ENCODE measurements at regions of chr22 and their contacts with region 1.

Region 1: DNA sequence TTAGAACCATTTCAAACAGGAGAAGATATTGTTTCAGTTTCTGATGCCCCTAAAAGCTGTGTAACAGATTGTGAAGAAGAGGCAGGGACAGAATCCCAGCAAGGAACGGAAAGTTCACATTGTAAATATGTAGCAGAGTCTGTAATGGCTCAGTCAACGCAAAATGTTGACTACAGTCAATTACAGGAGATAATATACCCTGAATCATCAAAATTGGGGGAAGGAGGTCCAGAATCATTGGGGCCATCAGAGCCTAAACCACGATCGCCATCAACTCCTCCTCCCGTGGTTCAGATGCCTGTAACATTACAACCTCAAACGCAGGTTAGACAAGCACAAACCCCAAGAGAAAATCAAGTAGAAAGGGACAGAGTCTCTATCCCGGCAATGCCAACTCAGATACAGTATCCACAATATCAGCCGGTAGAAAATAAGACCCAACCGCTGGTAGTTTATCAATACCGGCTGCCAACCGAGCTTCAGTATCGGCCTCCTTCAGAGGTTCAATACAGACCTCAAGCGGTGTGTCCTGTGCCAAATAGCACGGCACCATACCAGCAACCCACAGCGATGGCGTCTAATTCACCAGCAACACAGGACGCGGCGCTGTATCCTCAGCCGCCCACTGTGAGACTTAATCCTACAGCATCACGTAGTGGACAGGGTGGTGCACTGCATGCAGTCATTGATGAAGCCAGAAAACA is 40.8 kb downstream of the IGLL1 start:
- DNase-seq: peak; percentile 70
- H3K4me3 ChIP-seq: peak overlapping the region in 2 of 3 experiments; percentile 6 to 29
- H3K27ac ChIP-seq: no peak overlapping the region
- H3K4me1 ChIP-seq: no peaks in the 10 kb centered on the region
- H3K27me3 ChIP-seq: peaks cover 2% of the 10 kb centered on the region
- CTCF ChIP-seq: peak; percentile 86 to 93

Region 2: DNA sequence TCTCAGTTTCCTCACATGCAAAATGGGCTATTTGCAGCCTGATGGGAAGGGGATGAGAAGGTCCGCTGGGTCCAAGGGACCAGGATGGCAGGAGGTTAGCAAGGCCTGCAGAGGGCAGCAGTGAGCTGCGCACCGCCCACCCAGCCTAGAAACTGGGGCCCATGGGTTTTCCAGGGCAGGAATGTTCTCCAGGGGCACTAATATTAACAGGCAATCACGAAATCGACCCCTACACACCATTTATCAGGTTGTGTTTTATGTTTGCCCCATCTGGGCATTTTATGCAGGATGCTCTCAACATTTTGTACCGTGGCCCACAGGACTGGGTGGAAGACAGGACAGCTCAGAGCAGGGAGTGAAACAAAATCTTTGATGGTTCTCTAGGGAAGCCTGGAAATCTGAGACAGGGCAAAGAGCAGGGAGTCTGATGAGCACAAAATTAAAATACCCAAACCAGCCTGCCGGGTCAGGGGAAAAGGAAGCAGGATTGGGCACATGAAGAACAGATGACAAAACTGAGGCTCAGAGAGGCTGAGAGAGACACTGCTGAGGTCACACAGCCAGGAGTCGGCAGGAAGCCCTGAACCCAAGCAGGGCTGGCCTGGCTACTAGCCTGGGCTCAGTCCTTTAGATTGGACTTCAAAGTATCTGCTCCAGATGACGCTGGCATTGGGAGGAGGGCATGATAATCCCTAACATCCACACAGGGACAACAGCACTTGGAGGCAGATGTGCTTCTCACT is 360.6 kb before region 1 on chr22:
- CTCF ChIA-PET with region 1: no interaction called
- dilution Hi-C with region 1: no loop called
- in situ Hi-C with region 1: no loop called
- intact Hi-C with region 1: loop called (anchors 5 kb)
- DNase-seq: peak; percentile 32
- H3K4me3 ChIP-seq: no peak overlapping the region
- H3K27ac ChIP-seq: no peak overlapping the region
- H3K4me1 ChIP-seq: peaks cover 27% of the 10 kb centered on the region
- H3K27me3 ChIP-seq: no peaks in the 10 kb centered on the region
- CTCF ChIP-seq: peak; percentile 99

Region 3: DNA sequence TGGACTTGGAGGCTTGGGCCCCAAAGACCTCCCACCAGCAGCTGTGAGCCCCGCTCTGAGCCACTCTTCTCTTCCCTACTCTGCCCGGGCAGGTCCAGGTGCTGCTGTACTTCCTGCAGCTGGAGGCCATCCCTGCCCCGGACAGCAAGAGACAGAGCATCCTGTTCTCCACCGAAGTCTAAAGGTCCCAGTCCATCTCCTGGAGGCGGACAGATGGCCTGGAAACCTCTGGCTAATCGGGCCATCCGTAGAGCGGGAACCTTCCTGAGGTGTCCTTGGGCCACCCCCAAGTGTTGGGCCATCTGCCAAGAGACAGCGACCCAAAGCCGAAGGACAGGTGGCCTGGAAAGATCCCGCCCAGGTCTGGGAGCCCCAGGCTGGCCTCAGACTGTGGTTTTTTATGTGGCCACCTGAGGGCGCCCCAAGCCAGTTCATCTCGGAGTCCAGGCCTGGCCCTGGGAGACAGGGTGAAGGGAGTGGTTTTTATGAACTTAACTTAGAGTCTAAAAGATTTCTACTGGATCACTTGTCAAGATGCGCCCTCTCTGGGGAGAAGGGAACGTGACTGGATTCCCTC is 223.9 kb before region 1 on chr22:
- CTCF ChIA-PET with region 1: no interaction called
- dilution Hi-C with region 1: no loop called
- in situ Hi-C with region 1: no loop called
- intact Hi-C with region 1: loop called (anchors 5 kb)
- DNase-seq: peak; percentile 67
- H3K4me3 ChIP-seq: no peak overlapping the region
- H3K27ac ChIP-seq: no peak overlapping the region
- H3K4me1 ChIP-seq: peaks cover 4% of the 10 kb centered on the region
- H3K27me3 ChIP-seq: no peaks in the 10 kb centered on the region
- CTCF ChIP-seq: peak; percentile 21 to 51

Region 4: GRCh38 chr22:23402275-23403151 is 136.8 kb before region 1 on chr22:
- CTCF ChIA-PET with region 1: no interaction called
- dilution Hi-C with region 1: no loop called
- in situ Hi-C with region 1: no loop called
- intact Hi-C with region 1: loop called (anchors 2 kb)
- DNase-seq: peak; percentile 81
- H3K4me3 ChIP-seq: peak overlapping the region; percentile 53 to 67 (median 59)
- H3K27ac ChIP-seq: peak overlapping the region; percentile 33
- H3K4me1 ChIP-seq: peaks cover 29% of the 10 kb centered on the region
- H3K27me3 ChIP-seq: no peaks in the 10 kb centered on the region
- CTCF ChIP-seq: peak; percentile 57 to 71

Region 5: DNA sequence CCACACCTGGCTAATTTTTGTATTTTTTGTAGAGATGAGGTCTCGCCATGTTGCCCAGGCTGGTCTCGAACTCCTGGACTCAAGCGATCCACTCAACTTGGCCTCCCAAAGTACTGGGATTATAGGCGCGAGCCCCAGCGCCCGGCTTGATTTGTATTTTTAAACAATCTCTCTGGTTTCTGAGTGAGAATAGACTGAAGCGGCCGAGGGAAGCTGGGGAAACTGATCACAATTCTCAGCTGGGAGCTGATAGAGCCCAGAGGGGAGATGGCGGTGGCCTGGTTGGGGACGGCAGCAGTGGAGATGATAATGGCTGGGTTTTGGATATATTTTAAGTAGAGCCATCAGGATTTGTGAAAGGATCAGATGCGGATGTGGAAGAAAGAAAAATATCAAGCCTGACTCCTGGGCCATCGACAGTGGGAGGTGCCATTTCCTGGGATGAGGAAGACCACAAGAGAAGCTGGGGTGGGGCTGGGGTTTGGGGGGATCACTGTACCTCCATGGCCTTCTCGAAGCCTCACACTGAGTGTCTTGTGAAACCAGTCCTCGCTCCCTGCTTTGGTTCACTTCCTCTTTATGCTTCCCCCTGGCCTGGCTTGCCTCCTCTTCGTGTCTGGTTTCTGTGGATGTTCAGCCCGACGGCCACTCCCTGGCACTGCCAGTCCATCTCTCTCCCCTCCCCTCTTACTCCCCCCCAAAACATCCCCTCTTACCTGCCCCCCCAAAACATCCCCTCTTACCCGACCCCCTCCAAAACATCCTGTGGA is 11.1 kb before region 1 on chr22:
- CTCF ChIA-PET with region 1: no interaction called
- dilution Hi-C with region 1: no loop called
- in situ Hi-C with region 1: no loop called
- intact Hi-C with region 1: no loop called
- DNase-seq: no peak
- H3K4me3 ChIP-seq: no peak overlapping the region
- H3K27ac ChIP-seq: no peak overlapping the region
- H3K4me1 ChIP-seq: no peaks in the 10 kb centered on the region
- H3K27me3 ChIP-seq: no peaks in the 10 kb centered on the region
- CTCF ChIP-seq: no peak

Region 6: GRCh38 chr22:23591201-23591791 is 52.0 kb after region 1 on chr22:
- CTCF ChIA-PET with region 1: no interaction called
- dilution Hi-C with region 1: loop called (anchors 5 kb)
- in situ Hi-C with region 1: no loop called
- intact Hi-C with region 1: loop called (anchors 1 kb)
- DNase-seq: peak; percentile 11
- H3K4me3 ChIP-seq: no peak overlapping the region
- H3K27ac ChIP-seq: no peak overlapping the region
- H3K4me1 ChIP-seq: no peaks in the 10 kb centered on the region
- H3K27me3 ChIP-seq: no peaks in the 10 kb centered on the region
- CTCF ChIP-seq: peak; percentile 84

Region 7: GRCh38 chr22:23838681-23839468 is 299.6 kb after region 1 on chr22 and contains the start of gene DERL3:
- CTCF ChIA-PET with region 1: no interaction called
- dilution Hi-C with region 1: loop called (anchors 10 kb)
- in situ Hi-C with region 1: loop called (anchors 10 to 25 kb)
- intact Hi-C with region 1: no loop called
- DNase-seq: peak; percentile 78
- H3K4me3 ChIP-seq: peak within 1 kb of the TSS in 1 of 3 experiments; percentile 10
- H3K27ac ChIP-seq: no peak within 1 kb of the TSS
- H3K4me1 ChIP-seq: peaks cover 6% of the 10 kb centered on the region
- H3K27me3 ChIP-seq: no peaks in the 10 kb centered on the region
- CTCF ChIP-seq: no peak
- total RNA-seq, gene DERL3: not detected